ENCODE measurements at regions of chr5 and their contacts with region 1.

Region 1: DNA sequence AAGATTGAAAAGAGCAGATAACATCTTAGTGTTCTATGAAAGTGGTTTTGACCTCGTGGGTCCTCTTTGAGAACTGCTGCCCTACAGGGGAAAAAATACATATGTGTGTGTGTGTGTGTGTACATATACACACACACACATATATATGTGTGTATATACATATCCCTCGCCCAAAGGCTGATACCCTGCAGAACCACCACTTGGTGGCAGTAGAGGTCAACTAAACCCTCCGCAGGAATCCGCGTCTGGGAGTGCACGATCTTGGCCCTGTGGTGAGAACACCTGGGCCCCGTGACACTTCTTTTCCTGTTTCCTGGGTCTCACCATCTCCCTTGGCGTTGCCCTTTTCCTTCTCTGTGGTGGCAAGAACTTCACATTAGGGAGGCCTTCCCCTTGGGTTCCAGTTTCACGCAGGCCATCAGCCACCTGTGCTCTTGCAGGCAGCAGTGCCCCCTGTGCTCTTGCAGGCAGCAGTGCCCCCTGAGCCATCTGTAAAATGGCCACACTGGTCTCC is 8.2 kb downstream of the IL9 start:
- DNase-seq: no peak
- H3K4me3 ChIP-seq: no peak overlapping the region
- H3K27me3 ChIP-seq: 0 out of 2 replicates have a peak, but pooled peaks cover 2% of the 10 kb centered on the region
- CTCF ChIP-seq: peak; percentile 82

Region 2: DNA sequence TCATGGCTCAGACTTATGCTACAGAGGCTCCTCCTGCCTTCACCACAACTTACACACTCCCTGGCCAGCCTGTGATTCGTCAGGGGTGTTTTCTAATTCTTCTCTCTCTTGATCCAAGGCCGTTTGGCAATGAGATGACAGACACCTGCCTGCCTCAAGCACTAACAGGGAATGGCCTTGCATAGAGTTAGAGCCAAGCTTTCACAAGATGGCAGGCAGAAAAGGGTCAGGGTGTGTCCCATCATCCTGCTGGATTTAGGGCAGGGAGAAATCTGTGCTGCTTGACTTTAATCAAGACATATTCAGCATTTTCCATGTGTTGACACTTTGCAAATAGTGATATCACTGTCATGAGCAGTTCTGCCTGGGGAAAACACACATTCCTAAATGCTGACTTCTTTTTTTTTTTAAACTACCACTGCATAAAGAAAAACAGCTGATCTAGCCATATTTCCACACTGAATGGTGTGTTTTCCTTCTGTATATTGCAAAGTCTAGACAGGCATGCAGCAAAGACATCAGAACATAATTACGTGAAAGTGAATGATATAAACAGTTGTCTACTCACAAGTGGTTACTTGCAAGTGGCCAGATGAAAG is 147.9 kb before region 1 on chr5:
- CTCF ChIA-PET with region 1: no interaction called
- POLR2A ChIA-PET with region 1: no interaction called
- DNase-seq: no peak
- H3K4me3 ChIP-seq: no peak overlapping the region
- H3K27me3 ChIP-seq: no peaks in the 10 kb centered on the region
- CTCF ChIP-seq: no peak

Region 3: DNA sequence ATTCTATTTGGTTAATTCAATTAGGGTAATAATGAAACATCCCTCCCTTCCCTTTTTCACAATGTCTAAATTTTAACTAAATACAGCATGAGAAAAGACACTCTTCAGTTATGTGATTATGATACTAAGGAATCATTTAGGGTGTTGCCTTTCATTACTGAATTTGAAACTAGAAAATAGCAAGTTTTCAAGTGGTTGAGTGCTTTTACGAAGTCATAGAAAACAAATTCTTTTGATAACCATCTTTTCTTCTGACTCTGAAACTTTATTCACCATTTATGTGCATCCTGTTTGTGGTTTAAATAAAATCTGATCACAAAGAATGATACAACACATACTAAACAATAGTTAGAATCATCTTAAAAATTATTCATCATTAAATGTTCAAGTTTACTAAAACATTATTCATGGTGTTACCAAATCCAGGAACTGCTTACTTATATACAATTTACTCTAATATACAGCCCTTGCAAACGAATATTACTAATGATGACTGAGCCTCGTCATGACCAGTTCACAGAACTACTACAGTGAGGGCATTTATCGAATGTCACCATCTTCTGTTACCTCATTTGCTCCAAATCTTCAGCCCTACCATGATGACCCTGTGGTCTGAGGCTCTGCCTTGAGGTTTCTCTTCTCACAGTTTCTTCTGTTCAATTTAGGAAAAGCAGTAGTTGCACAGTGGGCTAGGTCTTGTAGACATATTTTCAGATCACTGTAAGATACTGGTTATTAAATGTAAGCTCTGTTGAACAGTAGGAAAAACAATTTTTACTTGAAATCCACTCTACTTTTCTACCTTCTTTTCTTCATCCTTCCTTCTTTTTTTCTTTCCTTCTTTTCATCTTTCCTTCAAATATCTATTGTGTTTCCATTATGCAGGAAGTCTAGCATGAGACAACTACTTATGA is 26.6 kb after region 1 on chr5:
- CTCF ChIA-PET with region 1: no interaction called
- POLR2A ChIA-PET with region 1: no interaction called
- DNase-seq: no peak
- H3K4me3 ChIP-seq: no peak overlapping the region
- H3K27me3 ChIP-seq: peaks cover 1% of the 10 kb centered on the region
- CTCF ChIP-seq: no peak

Region 4: GRCh38 chr5:135973323-135974020 is 86.1 kb after region 1 on chr5:
- CTCF ChIA-PET with region 1: no interaction called
- POLR2A ChIA-PET with region 1: no interaction called
- DNase-seq: peak; percentile 66
- H3K4me3 ChIP-seq: no peak overlapping the region
- H3K27me3 ChIP-seq: no peaks in the 10 kb centered on the region
- CTCF ChIP-seq: no peak

Region 5: GRCh38 chr5:136080483-136081216 is 193.2 kb after region 1 on chr5:
- CTCF ChIA-PET with region 1: interaction called, 13 read pairs
- POLR2A ChIA-PET with region 1: no interaction called
- DNase-seq: peak; percentile 60
- H3K4me3 ChIP-seq: peak overlapping the region; percentile 42
- H3K27me3 ChIP-seq: no peaks in the 10 kb centered on the region; the same call in none of the 2 replicates
- CTCF ChIP-seq: no peak

Region 6: GRCh38 chr5:136212252-136212721 is 324.9 kb after region 1 on chr5:
- CTCF ChIA-PET with region 1: interaction called, 74 read pairs
- POLR2A ChIA-PET with region 1: no interaction called
- DNase-seq: no peak
- H3K4me3 ChIP-seq: no peak overlapping the region
- H3K27me3 ChIP-seq: peaks cover 5% of the 10 kb centered on the region
- CTCF ChIP-seq: peak; percentile 88

Measured in BJ (cell line).